GM12878 (cell line): ENCODE measurements at regions of chr6 and their contacts with region 1.

Region 1: GRCh38 chr6:137415127-137415833 is 78.9 kb downstream of the OLIG3 start:
- DNase-seq: no peak
- ATAC-seq: peak; percentile 99
- H3K4me3 ChIP-seq: peak overlapping the region; percentile 62
- H3K27ac ChIP-seq: no peak overlapping the region
- H3K4me1 ChIP-seq: peaks cover 4% of the 10 kb centered on the region
- H3K27me3 ChIP-seq: peaks cover 0 to 3% of the 10 kb centered on the region in 2 experiments; a peak in 1 of 4 replicates
- CTCF ChIP-seq: peak; percentile 79 to 89 (median 85)
- EP300 ChIP-seq: no peak
- POLR2A ChIP-seq: no peak
- RAD21 ChIP-seq: peak; percentile 84

Region 2: DNA sequence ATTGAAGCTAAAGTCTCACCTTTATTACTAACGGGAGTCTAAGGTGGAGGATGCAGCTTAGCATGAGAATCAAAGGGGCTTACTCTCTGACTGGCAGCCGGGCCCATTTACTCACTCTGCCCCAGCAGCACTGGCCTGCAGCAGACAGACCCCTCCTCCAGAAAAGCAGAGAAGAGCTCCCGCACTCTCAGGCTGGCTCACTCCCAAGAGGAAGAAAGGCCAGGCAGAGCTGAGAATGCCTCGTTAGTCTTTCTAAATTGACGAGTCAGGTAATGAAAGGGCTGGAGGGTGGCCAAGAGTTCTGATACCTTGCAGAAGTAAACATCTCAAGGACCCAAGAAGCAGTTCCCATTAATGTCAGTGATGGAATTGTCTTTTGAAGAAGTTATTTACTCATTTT is 326.0 kb before region 1 on chr6:
- CTCF ChIA-PET with region 1: interaction called, 8 read pairs
- POLR2A ChIA-PET with region 1: no interaction called
- RAD21 ChIA-PET with region 1: interaction called, 7 read pairs
- SMC1A ChIA-PET with region 1: interaction called, 12 read pairs
- in situ Hi-C with region 1: loop called (anchors 5 kb)
- intact Hi-C with region 1: no loop called
- DNase-seq: no peak
- ATAC-seq: no peak
- H3K4me3 ChIP-seq: no peak overlapping the region
- H3K27ac ChIP-seq: no peak overlapping the region
- H3K4me1 ChIP-seq: peaks cover 39% of the 10 kb centered on the region
- H3K27me3 ChIP-seq: no peaks in the 10 kb centered on the region
- CTCF ChIP-seq: no peak
- EP300 ChIP-seq: no peak
- POLR2A ChIP-seq: no peak
- RAD21 ChIP-seq: no peak